Activated naive CD4-positive, alpha-beta T cell treated with anti-CD3 and anti-CD28 coated beads for 36 hours (primary cell): ENCODE measurements at regions of chr19 and their contacts with region 1.

Region 1: GRCh38 chr19:42634409-42635232 is 39.9 kb upstream of the CEACAM8 start:
- DNase-seq: peak; percentile 68
- H3K4me3 Mint-ChIP-seq: no peak overlapping the region
- H3K27ac Mint-ChIP-seq: no peak overlapping the region
- H3K4me1 Mint-ChIP-seq: no peaks in the 10 kb centered on the region
- H3K27me3 Mint-ChIP-seq: peaks cover 7% of the 10 kb centered on the region

Region 2: GRCh38 chr19:42764836-42765235 is 130.2 kb after region 1 on chr19:
- CTCF ChIA-PET with region 1: no interaction called
- intact Hi-C with region 1: loop called (anchors 10 kb)
- DNase-seq: no peak
- H3K4me3 Mint-ChIP-seq: no peak overlapping the region
- H3K27ac Mint-ChIP-seq: no peak overlapping the region
- H3K4me1 Mint-ChIP-seq: no peaks in the 10 kb centered on the region
- H3K27me3 Mint-ChIP-seq: peaks cover 5% of the 10 kb centered on the region